Activated CD8-positive, alpha-beta memory T cell treated with anti-CD3 and anti-CD28 coated beads, Interleukin-2, amount 10 ng/mL, durations not matched to agents 7 days and 5 days (primary cell): ENCODE measurements at regions of chr22 and their contacts with region 1.

Region 1: DNA sequence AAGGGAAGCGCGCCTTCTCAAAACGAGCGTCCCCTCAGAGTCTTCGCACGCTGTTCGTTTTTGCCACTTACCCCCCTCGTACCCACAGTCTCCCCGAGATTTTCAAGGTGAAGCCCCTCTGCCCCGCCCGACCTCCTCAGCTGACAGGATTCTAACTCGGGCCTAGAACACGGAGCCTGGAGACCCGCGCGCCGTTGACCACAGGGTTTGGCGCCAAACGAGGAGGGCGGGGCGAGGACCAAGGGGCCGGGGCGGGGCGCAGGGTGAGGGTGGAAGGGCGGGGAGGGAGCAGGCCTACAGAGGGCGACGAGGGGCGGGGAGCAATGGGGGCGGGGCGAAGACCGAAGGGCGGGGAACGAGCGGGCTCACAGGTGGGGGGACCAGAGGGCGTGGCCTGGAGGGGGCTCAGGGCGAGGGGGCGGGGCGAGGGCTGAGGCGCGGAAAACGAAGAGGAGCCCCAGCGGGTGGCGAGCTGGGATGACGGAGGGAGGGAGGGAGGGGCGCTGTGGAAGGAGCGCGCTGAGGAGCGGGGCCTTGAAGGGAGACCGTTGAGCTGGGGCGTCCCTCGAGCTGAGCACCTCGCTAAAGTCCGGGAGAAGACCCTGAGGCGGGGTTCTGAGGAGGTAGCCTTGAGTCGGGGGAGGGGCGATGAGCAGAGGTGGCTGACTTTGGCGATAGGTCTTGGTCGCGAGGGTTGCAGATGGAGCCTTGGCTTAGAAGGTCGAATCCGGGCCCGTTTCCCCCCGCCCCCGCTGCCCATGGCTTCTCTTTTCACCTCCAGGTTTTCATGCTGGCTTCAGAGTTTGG is at the start of gene DMC1:
- DNase-seq: peak; percentile 99
- ATAC-seq: peak; percentile 89
- H3K4me3 Mint-ChIP-seq: peak within 1 kb of the TSS; percentile 92
- H3K27ac Mint-ChIP-seq: peak within 1 kb of the TSS; percentile 98
- H3K4me1 Mint-ChIP-seq: peaks cover 23% of the 10 kb centered on the region
- H3K27me3 Mint-ChIP-seq: no peaks in the 10 kb centered on the region
- total RNA-seq, gene DMC1: 13.6 to 16.9 TPM

Region 2: GRCh38 chr22:38412435-38413084 is 157.6 kb before region 1 on chr22:
- CTCF ChIA-PET with region 1: interaction called, 18 read pairs
- DNase-seq: peak; percentile 48
- ATAC-seq: peak; percentile 79
- H3K4me3 Mint-ChIP-seq: no peak overlapping the region
- H3K27ac Mint-ChIP-seq: no peak overlapping the region
- H3K4me1 Mint-ChIP-seq: peaks cover 4% of the 10 kb centered on the region
- H3K27me3 Mint-ChIP-seq: no peaks in the 10 kb centered on the region

Region 3: GRCh38 chr22:38497869-38498268 is 72.3 kb before region 1 on chr22:
- CTCF ChIA-PET with region 1: interaction called, 12 read pairs
- DNase-seq: no peak
- ATAC-seq: peak; percentile 49
- H3K4me3 Mint-ChIP-seq: no peak overlapping the region
- H3K27ac Mint-ChIP-seq: no peak overlapping the region
- H3K4me1 Mint-ChIP-seq: peaks cover 65% of the 10 kb centered on the region
- H3K27me3 Mint-ChIP-seq: no peaks in the 10 kb centered on the region

Region 4: DNA sequence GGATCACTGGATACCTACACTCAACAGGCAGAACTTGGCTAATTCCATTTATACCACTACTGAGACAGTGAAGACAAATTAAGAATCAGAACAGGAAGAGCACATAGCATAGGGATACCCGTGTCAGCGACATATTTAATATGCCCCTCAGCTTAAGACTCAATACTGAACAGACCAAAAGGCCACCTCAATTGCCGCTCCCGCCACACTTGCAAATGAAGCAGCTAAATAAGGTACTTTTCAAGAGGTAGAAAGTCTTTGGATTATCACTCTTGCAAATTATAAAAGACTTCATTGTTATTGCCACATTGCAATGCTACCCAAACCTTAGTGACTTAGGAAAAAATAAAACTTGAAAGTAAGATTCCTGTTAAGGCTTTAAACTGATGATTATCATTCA is 67.2 kb before region 1 on chr22:
- CTCF ChIA-PET with region 1: interaction called, 12 read pairs
- DNase-seq: no peak
- ATAC-seq: no peak
- H3K4me3 Mint-ChIP-seq: peak overlapping the region; percentile 99
- H3K27ac Mint-ChIP-seq: peak overlapping the region; percentile 75
- H3K4me1 Mint-ChIP-seq: peaks cover 65% of the 10 kb centered on the region
- H3K27me3 Mint-ChIP-seq: no peaks in the 10 kb centered on the region

Region 5: GRCh38 chr22:38656256-38657044 is 86.3 kb after region 1 on chr22 and contains the starts of genes CBY1 and FAM227A:
- CTCF ChIA-PET with region 1: no interaction called
- DNase-seq: peak; percentile 89
- ATAC-seq: peak; percentile 87
- H3K4me3 Mint-ChIP-seq: peak within 1 kb of the TSS; percentile 80
- H3K27ac Mint-ChIP-seq: peak within 1 kb of the TSS; percentile 94
- H3K4me1 Mint-ChIP-seq: peaks cover 22% of the 10 kb centered on the region
- H3K27me3 Mint-ChIP-seq: no peaks in the 10 kb centered on the region
- total RNA-seq, gene CBY1: 11.2 to 12.0 TPM
- total RNA-seq, gene FAM227A: 0.12 to 0.40 TPM